ENCODE measurements at regions of chr11 and their contacts with region 1.

Region 1: DNA sequence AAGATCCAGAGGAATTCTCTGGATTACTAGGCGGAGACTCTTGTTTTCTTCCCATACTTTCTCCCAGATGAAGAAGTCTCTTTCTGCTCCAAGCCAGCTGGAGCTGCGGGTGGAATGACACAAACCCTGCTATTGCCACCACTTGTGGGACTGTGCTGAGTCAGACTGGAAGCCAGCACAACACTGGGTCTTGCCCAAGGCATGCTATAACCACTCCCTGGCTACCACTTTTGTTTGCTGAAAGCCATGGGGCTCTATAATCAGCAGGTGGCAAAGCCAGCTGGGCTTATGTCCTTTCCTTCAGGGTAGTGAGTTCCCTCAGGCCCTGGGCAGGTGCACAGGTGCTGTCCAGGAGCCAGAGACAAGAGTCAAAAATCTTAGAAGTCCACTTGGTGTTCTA is 9.1 kb downstream of the OR4S1 start:
- DNase-seq: no peak
- ATAC-seq: no peak
- H3K4me3 ChIP-seq: no peak overlapping the region
- H3K27ac ChIP-seq: no peak overlapping the region
- H3K4me1 ChIP-seq: no peaks in the 10 kb centered on the region
- H3K27me3 ChIP-seq: no peaks in the 10 kb centered on the region
- CTCF ChIP-seq: no peak
- EP300 ChIP-seq: no peak
- POLR2A ChIP-seq: no peak
- RAD21 ChIP-seq: no peak

Region 2: DNA sequence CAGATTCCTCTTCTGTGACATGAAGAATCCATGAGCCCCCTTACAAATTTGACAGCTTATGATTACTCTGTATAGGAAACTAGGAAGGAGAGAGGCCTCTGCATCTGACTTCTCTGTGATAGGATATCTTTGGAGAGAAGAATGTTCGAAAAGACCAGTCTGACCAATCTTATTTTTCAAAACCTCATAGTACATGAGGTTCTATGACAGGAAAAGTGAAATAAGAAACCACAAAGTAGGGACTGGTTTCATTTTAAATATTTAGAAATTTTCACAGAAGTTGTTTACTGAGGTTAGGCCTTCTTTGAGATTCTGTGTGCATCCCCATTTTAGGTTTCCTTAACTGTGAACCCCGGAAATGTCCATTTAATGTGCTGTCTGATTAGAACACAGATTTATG is 53.5 kb before region 1 on chr11:
- CTCF ChIA-PET with region 1: no interaction called
- POLR2A ChIA-PET with region 1: no interaction called
- in situ Hi-C with region 1: no loop called
- intact Hi-C with region 1: loop called (anchors 10 kb)
- DNase-seq: no peak
- ATAC-seq: no peak
- H3K4me3 ChIP-seq: no peak overlapping the region
- H3K27ac ChIP-seq: no peak overlapping the region
- H3K4me1 ChIP-seq: no peaks in the 10 kb centered on the region
- H3K27me3 ChIP-seq: no peaks in the 10 kb centered on the region
- CTCF ChIP-seq: no peak
- EP300 ChIP-seq: no peak
- POLR2A ChIP-seq: no peak
- RAD21 ChIP-seq: no peak